ENCODE measurements at regions of chr11 and their contacts with region 1.

Region 1: GRCh38 chr11:2196970-2197770 is 25.6 kb upstream of the TH start:
- DNase-seq: peak; percentile 58 to 93 (median 82)
- H3K4me3 ChIP-seq: no peak overlapping the region
- H3K27ac ChIP-seq: no peak overlapping the region
- H3K4me1 ChIP-seq: no peaks in the 10 kb centered on the region
- H3K27me3 ChIP-seq: no peaks in the 10 kb centered on the region
- CTCF ChIP-seq: peak; percentile 71 to 94 (median 82)
- POLR2A ChIP-seq: no peak

Region 2: GRCh38 chr11:2156416-2157182 is 40.6 kb before region 1 on chr11:
- intact Hi-C with region 1: no loop called
- DNase-seq: peak; percentile 72 to 95 (median 83)
- H3K4me3 ChIP-seq: no peak overlapping the region
- H3K27ac ChIP-seq: no peak overlapping the region
- H3K4me1 ChIP-seq: peaks cover 0 to 3% of the 10 kb centered on the region in 2 donors
- H3K27me3 ChIP-seq: peaks cover 9% of the 10 kb centered on the region
- CTCF ChIP-seq: peak; percentile 58 to 91 (median 81)
- POLR2A ChIP-seq: no peak

Region 3: DNA sequence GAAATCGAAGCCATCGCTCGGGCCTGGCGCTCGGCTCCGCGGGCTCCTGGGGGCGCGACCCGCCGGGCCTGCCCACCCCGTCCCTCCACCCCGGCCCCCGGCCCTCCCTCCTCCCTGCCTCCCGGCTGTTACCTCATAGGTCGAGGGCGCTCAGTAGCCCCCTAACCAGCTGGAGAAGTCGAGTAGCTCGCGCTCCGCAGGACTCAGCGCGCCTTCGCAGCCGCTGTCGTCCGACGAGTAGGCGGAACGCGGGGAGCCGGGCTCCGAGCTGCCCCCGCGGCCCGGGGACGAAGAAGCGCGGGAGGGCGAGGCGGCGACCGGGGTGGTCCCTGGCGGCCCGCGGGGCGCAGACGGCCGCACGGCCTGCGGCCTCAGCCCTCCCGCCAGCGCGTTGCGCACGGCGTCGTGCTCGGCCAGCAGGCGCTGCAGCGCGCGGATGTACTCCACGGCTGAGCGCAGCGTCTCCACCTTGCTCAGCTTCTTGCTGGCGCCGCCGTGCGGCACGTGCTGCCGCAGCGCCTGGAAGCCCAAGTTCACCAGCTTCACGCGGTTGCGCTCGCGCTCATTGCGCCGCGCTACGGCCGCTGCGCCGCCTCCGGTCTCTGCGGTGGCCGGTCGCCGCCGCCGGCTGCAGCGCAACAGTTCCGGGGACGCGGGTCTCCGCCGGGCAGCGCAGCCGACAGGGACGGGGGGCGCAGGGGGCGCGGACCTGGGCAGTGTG is 72.6 kb after region 1 on chr11:
- intact Hi-C with region 1: no loop called
- DNase-seq: peak in 3 of 7 donors; percentile 27 to 53 (median 29)
- H3K4me3 ChIP-seq: peak overlapping the region in 1 of 4 donors; percentile 56
- H3K27ac ChIP-seq: peak overlapping the region in 2 of 5 donors; percentile 47 to 81
- H3K4me1 ChIP-seq: peaks cover 0 to 14% of the 10 kb centered on the region in 2 donors
- H3K27me3 ChIP-seq: peaks cover 38% of the 10 kb centered on the region
- CTCF ChIP-seq: peak in 1 of 6 experiments; percentile 18
- POLR2A ChIP-seq: no peak

Region 4: GRCh38 chr11:2298795-2299761 is 101.9 kb after region 1 on chr11:
- intact Hi-C with region 1: loop called (anchors 2 to 5 kb)
- DNase-seq: peak in 3 of 7 donors; percentile 3 to 56 (median 21)
- H3K4me3 ChIP-seq: no peak overlapping the region
- H3K27ac ChIP-seq: no peak overlapping the region
- H3K4me1 ChIP-seq: peaks cover 0 to 14% of the 10 kb centered on the region in 2 donors
- H3K27me3 ChIP-seq: peaks cover 4% of the 10 kb centered on the region
- CTCF ChIP-seq: peak in 2 of 6 experiments; percentile 13 to 26
- POLR2A ChIP-seq: no peak

Region 5: DNA sequence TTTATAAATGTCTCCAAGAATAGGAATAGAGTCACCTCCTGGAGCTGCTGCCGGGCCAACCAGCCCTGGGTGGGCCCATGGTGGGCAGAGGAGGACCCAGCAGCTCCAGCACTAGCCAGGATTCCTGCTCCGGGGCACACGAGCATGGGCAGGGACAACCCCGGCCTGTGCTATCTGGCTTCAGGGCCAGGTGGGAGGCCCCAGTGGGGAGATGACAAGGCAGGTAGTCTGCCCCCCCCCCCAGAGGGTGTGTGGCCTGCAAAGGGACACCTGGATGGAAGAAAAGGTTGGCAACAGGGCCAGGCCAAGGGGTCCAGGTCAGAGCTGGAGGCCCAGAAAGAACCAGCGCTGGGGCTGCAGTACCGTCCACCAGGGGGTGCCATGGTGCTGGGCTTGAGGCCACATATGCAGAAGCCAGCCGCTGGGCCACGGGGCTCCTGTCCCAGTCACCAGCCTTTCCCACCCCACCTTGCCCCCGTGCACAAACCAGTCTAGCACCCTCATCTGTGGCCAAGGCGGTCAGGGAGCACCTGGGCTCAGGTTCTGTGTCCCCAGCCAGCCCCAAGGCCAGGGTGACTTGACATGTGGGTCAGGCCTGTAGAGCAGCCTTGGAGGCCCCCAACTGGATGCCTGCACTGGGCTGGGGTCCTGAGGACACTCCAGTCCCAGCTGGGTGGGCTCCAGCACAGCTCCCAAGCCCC is 108.1 kb after region 1 on chr11:
- intact Hi-C with region 1: loop called (anchors 2 to 5 kb)
- DNase-seq: peak; percentile 78 to 94 (median 88)
- H3K4me3 ChIP-seq: no peak overlapping the region
- H3K27ac ChIP-seq: peak overlapping the region in 3 of 5 donors; percentile 19 to 83 (median 70)
- H3K4me1 ChIP-seq: peaks cover 0 to 27% of the 10 kb centered on the region in 2 donors
- H3K27me3 ChIP-seq: no peaks in the 10 kb centered on the region
- CTCF ChIP-seq: peak; percentile 80 to 96 (median 92)
- POLR2A ChIP-seq: no peak

Region 6: GRCh38 chr11:2420502-2421225 is 223.5 kb after region 1 on chr11:
- intact Hi-C with region 1: loop called (anchors 2 to 5 kb)
- DNase-seq: peak; percentile 58 to 82 (median 78)
- H3K4me3 ChIP-seq: no peak overlapping the region
- H3K27ac ChIP-seq: no peak overlapping the region
- H3K4me1 ChIP-seq: peaks cover 0 to 4% of the 10 kb centered on the region in 2 donors
- H3K27me3 ChIP-seq: peaks cover 3% of the 10 kb centered on the region
- CTCF ChIP-seq: peak; percentile 83 to 96 (median 92)
- POLR2A ChIP-seq: no peak

Measured in adrenal gland (tissue), 19 donors.